ENCODE measurements at regions of chr9 and their contacts with region 1.

Region 1: DNA sequence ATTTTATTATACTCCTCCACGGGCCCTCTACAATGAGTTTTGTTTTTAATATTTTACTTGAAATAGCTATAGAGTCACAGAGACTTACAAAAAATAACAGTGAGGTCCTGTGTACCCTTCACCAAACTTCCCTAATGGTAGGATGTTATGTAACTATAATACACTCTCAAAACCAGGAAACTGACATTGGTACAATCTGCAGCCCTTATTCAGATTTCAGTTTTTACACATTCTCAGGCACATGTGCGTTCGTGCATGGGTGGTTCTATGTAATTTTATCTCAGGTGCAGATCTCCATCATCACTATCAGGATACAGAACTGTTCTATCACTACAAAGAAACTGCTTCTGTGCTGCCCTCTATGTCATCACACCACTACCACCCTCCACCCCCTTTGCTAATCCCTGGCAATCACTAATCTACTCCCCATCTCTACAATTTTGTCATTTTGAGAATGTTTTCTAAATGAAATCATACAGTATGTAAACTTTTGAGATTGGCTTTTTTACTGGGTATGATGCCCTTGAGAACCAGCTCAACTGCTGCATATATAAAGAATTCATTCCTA is 16.4 kb downstream of the RAB14 start:
- DNase-seq: no peak
- ATAC-seq: no peak
- H3K4me3 ChIP-seq: no peak overlapping the region
- H3K27ac ChIP-seq: no peak overlapping the region
- H3K4me1 ChIP-seq: peaks cover 13% of the 10 kb centered on the region
- H3K27me3 ChIP-seq: no peaks in the 10 kb centered on the region
- CTCF ChIP-seq: no peak
- POLR2A ChIP-seq: no peak
- RAD21 ChIP-seq: no peak

Region 2: GRCh38 chr9:121169094-121169601 is 16.1 kb before region 1 on chr9:
- CTCF ChIA-PET with region 1: interaction called, 3 read pairs
- POLR2A ChIA-PET with region 1: interaction called, 17 read pairs
- dilution Hi-C with region 1: no loop called
- in situ Hi-C with region 1: no loop called
- intact Hi-C with region 1: no loop called
- DNase-seq: no peak
- ATAC-seq: peak; percentile 51; the same call in 1 of the 2 replicates
- H3K4me3 ChIP-seq: no peak overlapping the region
- H3K27ac ChIP-seq: no peak overlapping the region
- H3K4me1 ChIP-seq: peaks cover 5% of the 10 kb centered on the region; the same call in 1 of the 2 replicates
- H3K27me3 ChIP-seq: no peaks in the 10 kb centered on the region
- CTCF ChIP-seq: peak; percentile 32; the same call in 1 of the 2 replicates
- POLR2A ChIP-seq: no peak
- RAD21 ChIP-seq: no peak

Region 3: DNA sequence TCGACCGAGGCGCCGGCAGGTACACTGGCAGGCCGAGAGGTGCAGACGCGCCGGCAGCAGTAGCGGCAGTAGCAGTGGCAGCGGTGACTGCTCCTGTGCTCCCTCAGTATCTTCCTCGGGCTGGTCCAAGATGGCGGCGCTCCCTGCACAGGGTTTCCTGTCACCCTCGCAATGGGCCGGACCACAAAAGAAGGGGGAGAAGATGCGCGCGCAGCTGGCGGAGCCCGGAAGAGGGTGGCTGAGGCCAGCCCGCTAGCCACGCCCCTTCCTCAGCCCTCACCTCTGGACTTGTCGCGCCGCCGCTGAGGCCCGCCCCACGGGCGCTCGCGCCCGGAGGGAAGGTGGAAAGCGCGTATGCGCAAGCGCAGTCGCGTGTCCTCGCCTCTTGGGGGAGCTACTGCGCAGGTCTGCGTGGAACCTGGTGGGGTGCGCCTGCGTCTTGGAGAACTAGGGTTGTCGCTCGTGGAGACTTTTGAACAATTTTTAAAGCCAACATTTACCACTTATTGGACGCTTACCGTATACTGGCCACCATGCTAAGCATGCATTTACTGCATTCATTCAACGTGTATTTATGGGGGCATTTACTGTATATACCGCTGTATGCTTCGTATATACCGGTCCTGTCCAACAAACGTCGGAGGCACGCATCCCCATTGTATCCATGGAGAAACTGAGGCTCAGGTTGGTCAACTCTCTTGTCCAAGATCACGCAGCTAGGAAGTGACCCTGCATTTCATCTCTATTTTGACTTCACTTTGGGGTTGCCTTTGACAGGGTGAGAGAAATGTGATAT is 16.7 kb after region 1 on chr9 and contains the start of gene RAB14:
- CTCF ChIA-PET with region 1: no interaction called
- POLR2A ChIA-PET with region 1: interaction called, 3 read pairs
- dilution Hi-C with region 1: no loop called
- in situ Hi-C with region 1: no loop called
- intact Hi-C with region 1: loop called (anchors 2 kb)
- DNase-seq: peak; percentile 97
- ATAC-seq: peak; percentile 94
- H3K4me3 ChIP-seq: peak within 1 kb of the TSS; percentile 77
- H3K27ac ChIP-seq: peak within 1 kb of the TSS; percentile 90
- H3K4me1 ChIP-seq: peaks cover 7% of the 10 kb centered on the region
- H3K27me3 ChIP-seq: no peaks in the 10 kb centered on the region
- CTCF ChIP-seq: peak; percentile 53
- POLR2A ChIP-seq: peak; percentile 77
- RAD21 ChIP-seq: no peak
- total RNA-seq, gene RAB14: 20.1 and 36.1 TPM in 2 replicates

Region 4: DNA sequence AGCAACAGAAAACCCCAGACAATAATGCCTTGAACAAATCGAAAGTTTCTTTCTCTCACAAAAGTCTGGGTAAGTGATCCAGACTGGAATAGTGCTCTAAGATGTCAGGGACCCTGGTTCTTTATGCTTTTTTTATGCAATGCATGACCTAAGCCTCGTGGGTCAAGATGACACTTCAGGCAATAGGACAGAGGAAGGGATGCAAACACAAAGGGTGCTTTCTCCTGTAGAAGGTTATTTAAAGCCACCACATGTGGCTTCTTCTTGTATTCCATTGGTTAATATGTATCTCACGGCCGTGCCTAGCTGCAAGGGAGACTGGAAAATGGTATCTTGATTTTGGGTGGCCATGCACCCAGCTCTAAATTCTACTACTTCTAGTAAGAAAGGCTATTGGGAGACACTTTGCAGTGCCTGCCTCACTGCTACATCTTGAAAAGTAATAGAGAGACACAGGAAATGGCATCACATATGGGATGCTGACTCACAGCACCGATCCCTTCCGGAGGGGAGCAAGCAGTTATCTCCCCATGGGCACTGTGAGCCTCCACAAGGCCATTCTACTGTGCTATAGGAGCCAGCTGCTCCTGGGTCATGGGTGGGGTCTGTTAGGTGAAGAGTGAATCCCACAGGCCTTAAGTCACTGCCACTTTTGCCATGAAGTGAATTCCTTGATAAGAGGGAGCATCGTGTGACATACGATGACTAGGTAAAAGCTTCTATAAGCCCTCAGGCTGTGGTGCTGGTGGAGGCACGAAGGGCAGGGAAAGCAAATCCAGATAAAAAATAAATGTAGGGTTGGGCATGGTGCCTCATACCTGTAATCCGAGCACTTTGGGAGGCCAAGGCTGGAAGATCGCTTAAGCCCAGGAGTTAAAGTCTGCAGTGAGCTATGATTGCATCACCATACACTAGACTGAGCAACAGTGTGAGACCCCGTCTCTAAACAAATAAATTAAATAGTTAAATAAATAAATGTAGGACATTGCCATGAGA is 48.9 kb after region 1 on chr9:
- CTCF ChIA-PET with region 1: no interaction called
- POLR2A ChIA-PET with region 1: no interaction called
- dilution Hi-C with region 1: no loop called
- in situ Hi-C with region 1: no loop called
- intact Hi-C with region 1: no loop called
- DNase-seq: peak; percentile 81
- ATAC-seq: peak; percentile 92
- H3K4me3 ChIP-seq: no peak overlapping the region
- H3K27ac ChIP-seq: peak overlapping the region; percentile 74
- H3K4me1 ChIP-seq: peaks cover 8% of the 10 kb centered on the region
- H3K27me3 ChIP-seq: no peaks in the 10 kb centered on the region
- CTCF ChIP-seq: no peak
- POLR2A ChIP-seq: no peak
- RAD21 ChIP-seq: no peak